Sciatic nerve (tissue), 2 donors: ENCODE measurements at regions of chr3 and their contacts with region 1.

Region 1: DNA sequence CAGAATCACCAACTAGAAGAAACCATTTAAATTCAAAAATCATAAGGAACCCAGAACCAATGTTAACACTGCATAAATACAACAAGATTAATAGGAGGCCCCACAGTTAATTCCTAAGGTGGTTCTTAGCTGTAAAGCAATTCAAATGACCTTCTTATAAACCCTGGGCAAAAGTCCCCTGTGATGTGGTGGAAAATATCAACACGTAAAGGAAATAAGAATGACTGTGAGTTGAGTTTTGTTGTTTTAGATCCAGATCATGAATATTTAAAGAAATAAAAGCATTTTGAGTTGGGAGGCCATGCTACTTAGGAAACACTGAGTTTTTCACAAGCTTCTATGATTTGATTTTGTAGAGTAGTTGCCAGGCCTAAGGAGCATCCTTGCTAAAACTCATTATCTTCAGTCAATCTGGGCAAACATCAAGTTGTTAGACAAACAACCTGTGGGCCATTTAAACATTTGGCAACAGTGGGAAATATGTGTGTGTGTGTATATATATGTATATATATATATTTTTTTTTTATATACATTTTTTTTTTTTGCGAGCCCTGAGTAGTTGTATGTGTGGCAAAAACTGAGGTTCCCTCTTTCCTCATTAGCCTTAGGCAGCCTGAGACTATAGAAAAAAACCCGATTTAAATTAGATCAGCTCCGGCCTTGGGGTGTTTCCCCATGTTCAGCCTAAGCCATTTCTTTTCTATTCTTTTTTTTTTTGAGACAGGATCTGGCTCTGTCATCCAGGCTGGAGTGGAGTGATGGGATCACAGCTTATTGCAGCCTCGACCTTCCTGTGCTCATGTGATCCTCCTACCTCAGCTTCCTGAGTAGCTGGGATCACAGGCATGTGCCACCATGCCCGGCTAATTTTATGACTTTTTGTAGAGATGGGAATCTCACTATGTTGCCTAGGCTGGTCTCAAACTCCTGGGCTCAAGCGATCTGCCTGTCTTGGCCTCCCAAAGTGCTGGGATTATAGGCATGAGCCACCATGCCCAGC is 8.0 kb upstream of the PXK start:
- DNase-seq: no peak
- ATAC-seq: no peak

Region 2: GRCh38 chr3:58249358-58250092 is 75.2 kb before region 1 on chr3:
- intact Hi-C with region 1: no loop called
- DNase-seq: no peak
- ATAC-seq: peak; percentile 42

Region 3: DNA sequence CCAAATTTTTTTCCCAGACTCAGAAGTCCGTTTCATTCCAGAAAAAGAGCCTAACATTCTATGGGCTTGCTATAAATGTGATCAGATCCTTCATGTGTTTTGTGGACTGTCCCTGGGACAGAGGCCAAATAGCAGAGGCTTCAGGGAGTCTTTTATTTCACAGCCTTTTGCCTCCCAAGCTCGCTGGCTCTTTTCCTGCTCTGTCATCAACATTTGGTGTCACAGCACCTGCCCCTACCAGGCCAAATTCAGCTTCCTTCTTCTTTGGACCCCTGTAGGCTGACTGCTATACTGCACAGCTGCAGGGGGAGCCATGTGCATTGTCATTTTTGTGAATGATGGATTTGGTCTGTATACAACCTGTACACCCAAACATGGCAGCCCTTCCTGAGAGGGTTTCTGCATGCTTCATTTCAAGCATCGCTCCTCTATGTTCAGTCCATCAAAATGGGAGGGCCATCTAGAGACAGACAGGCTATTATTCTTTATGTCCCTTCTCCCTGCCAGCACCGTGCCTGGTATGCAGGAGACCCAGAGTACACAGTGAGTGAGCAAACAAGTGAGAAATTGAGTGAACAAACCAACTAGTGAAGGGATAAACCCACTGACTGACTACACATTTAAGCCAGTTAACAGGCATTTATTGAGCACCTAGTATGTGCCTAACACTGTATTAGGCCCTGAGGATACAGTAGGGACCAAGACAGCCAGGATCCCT is 36.5 kb before region 1 on chr3:
- intact Hi-C with region 1: no loop called
- DNase-seq: no peak
- ATAC-seq: no peak

Region 4: DNA sequence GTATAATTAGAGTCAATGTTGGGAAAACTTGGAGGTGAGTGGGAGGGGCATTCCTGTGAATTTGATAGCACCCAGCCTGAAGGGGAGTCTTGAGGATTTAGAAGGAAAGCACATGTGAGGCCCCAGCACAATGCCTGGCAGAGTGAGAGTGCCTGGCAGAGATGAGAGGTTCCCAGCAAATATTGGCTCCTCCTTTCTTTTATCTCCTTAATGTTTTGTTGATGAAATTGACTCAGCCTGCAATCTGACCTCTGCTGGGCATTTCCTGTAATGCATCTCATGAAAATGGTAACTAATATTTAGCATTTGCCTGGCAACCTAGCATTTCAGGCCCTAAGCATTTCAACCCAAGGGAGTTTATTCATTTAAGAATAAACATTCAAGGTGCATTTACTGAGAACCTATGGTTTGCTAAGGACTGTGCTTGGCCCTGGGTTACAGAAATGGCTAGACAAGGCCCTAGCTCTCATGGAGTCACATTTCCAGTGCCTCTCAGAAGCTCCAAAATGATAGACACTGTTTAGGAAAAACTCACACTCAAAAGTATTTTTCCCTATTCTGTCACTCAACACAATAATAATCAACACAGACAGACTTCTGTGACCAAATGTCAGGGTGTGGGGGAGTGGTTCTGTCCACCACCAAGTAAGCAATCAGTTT is 90.0 kb after region 1 on chr3:
- intact Hi-C with region 1: loop called (anchors 10 kb)
- DNase-seq: no peak
- ATAC-seq: peak; percentile 70

Region 5: DNA sequence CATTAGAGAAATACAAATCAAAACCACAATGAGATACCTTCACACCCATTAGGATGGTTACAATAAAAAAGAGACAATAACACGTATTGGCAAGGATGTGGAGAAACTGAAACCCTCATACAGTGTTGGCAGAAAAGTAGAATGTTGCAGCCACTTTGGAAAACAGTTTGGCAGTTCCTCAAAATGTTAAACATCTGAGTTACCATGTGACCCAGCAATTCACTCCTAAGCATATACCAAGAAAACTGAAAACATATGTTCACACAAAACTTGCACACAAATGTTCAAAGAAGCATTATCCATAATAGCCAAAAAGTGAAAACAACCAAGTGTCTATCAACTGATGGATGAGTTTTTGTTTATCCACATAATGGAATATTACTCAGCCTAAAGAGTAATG is 508.8 kb after region 1 on chr3:
- intact Hi-C with region 1: no loop called
- DNase-seq: no peak
- ATAC-seq: no peak